ENCODE measurements at regions of chr1 and their contacts with region 1.

Region 1: GRCh38 chr1:43238085-43238484 is 31.7 kb upstream of the TMEM125 start:
- DNase-seq: peak; percentile 28
- H3K4me3 ChIP-seq: no peak overlapping the region
- H3K27ac ChIP-seq: no peak overlapping the region
- H3K4me1 ChIP-seq: peaks cover 7% of the 10 kb centered on the region
- H3K27me3 ChIP-seq: no peaks in the 10 kb centered on the region
- CTCF ChIP-seq: peak; percentile 85 to 93

Region 2: GRCh38 chr1:43008115-43009060 is 229.7 kb before region 1 on chr1:
- CTCF ChIA-PET with region 1: no interaction called
- dilution Hi-C with region 1: no loop called
- in situ Hi-C with region 1: no loop called
- intact Hi-C with region 1: no loop called
- DNase-seq: no peak
- H3K4me3 ChIP-seq: no peak overlapping the region
- H3K27ac ChIP-seq: no peak overlapping the region
- H3K4me1 ChIP-seq: peaks cover 17% of the 10 kb centered on the region
- H3K27me3 ChIP-seq: no peaks in the 10 kb centered on the region
- CTCF ChIP-seq: no peak

Region 3: DNA sequence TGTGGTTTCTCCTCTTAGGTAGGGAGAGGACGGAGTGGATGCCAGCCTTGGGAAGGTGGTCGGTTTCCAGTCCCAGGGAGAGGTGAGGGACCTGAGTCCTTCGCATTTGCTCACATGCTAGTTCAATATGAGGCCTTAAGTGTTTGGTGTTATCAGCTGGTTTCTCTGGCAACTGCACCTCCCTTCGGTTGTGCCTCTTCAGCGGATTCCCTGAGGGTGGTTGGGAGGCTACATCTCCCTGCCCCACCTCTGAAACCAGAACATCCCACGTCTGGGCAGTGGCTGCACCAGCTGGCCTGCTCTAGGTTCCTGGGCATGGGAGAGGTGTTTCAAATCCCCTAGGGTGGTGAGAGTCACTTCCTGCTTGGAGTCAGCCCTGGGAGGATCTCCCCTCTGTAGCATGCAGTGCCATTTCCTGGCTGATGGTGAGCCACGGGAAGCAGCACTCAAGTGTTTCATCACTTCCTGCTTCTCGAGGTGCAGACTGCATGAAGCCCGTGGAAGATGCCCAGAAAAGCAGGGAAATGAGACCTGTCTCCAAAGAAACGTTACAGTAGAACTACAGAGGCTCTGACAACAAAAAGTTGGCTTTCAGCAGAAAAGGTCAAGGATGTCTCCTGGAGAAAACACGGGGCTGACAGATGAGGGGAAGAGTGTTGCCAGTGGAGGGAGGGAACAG is 36.2 kb after region 1 on chr1:
- CTCF ChIA-PET with region 1: no interaction called
- dilution Hi-C with region 1: no loop called
- in situ Hi-C with region 1: no loop called
- intact Hi-C with region 1: no loop called
- DNase-seq: peak; percentile 55
- H3K4me3 ChIP-seq: no peak overlapping the region
- H3K27ac ChIP-seq: no peak overlapping the region
- H3K4me1 ChIP-seq: peaks cover 17% of the 10 kb centered on the region
- H3K27me3 ChIP-seq: no peaks in the 10 kb centered on the region
- CTCF ChIP-seq: no peak

Region 4: GRCh38 chr1:43300378-43301094 is 62.5 kb after region 1 on chr1 and contains the start of gene TIE1:
- CTCF ChIA-PET with region 1: no interaction called
- dilution Hi-C with region 1: loop called (anchors 5 kb)
- in situ Hi-C with region 1: no loop called
- intact Hi-C with region 1: no loop called
- DNase-seq: no peak
- H3K4me3 ChIP-seq: no peak within 1 kb of the TSS
- H3K27ac ChIP-seq: no peak within 1 kb of the TSS
- H3K4me1 ChIP-seq: no peaks in the 10 kb centered on the region
- H3K27me3 ChIP-seq: no peaks in the 10 kb centered on the region
- CTCF ChIP-seq: no peak
- total RNA-seq, gene TIE1: not detected

Region 5: DNA sequence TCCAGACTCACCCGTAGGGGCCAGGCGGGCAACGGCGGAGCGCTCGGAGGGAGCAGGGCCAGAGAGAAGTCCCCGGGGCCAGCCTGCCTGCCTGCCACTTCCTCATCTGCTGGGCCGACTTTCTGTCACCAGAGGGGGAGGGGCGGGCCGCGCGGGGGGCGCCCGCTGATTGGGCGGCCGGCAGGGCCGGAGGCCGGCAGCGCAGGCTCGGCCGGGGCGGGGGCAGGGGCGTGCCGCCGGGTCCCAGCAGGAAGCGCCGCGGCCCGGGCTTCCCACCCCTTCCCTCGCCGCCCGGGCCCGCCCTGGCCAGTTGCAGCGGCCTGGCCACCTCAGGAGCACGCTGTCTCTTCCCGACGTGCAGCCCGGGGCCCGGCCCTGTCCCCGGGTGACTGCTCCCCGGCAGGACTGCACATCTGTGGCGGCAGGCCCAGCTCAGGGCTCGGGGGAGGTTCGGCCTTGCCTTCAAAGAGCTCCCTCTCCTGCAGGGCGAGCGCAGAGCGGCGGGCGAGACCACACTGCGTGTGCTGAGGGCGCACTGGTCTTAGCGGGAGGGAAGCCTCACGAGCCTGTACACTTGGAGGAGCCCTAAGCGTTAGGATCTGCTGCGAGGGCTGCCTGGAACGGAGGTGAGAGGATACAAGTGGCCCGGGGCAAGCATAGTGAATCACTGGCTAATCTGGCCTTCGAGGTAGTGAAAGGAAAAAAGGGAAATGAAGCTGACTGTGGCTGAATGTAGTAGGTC is 130.0 kb after region 1 on chr1 and contains the start of gene ELOVL1:
- CTCF ChIA-PET with region 1: no interaction called
- dilution Hi-C with region 1: no loop called
- in situ Hi-C with region 1: no loop called
- intact Hi-C with region 1: loop called (anchors 1 kb)
- DNase-seq: peak; percentile 84
- H3K4me3 ChIP-seq: peak within 1 kb of the TSS; percentile 76 to 81 (median 80)
- H3K27ac ChIP-seq: peak within 1 kb of the TSS; percentile 65
- H3K4me1 ChIP-seq: peaks cover 36% of the 10 kb centered on the region
- H3K27me3 ChIP-seq: no peaks in the 10 kb centered on the region
- CTCF ChIP-seq: peak in 1 of 2 donors; percentile 48
- total RNA-seq, gene ELOVL1: 34.7 to 137 TPM

Region 6: GRCh38 chr1:43414634-43415223 is 176.6 kb after region 1 on chr1:
- CTCF ChIA-PET with region 1: no interaction called
- dilution Hi-C with region 1: no loop called
- in situ Hi-C with region 1: loop called (anchors 10 to 25 kb)
- intact Hi-C with region 1: loop called (anchors 1 kb)
- DNase-seq: peak; percentile 24
- H3K4me3 ChIP-seq: no peak overlapping the region
- H3K27ac ChIP-seq: no peak overlapping the region
- H3K4me1 ChIP-seq: no peaks in the 10 kb centered on the region
- H3K27me3 ChIP-seq: no peaks in the 10 kb centered on the region
- CTCF ChIP-seq: peak; percentile 42 to 53

Region 7: GRCh38 chr1:44049839-44050238 is 811.8 kb after region 1 on chr1:
- CTCF ChIA-PET with region 1: interaction called, 4 read pairs
- dilution Hi-C with region 1: no loop called
- in situ Hi-C with region 1: no loop called
- intact Hi-C with region 1: loop called (anchors 10 kb)
- DNase-seq: peak; percentile 90
- H3K4me3 ChIP-seq: no peak overlapping the region
- H3K27ac ChIP-seq: peak overlapping the region; percentile 18
- H3K4me1 ChIP-seq: peaks cover 36% of the 10 kb centered on the region
- H3K27me3 ChIP-seq: no peaks in the 10 kb centered on the region
- CTCF ChIP-seq: no peak

Measured in mammary epithelial cell (primary cell).